MCF 10A (cell line): ENCODE measurements at regions of chr4 and their contacts with region 1.

Region 1: GRCh38 chr4:65580551-65580950 is 89.7 kb downstream of the EPHA5 start:
- DNase-seq: peak; percentile 23
- H3K4me3 Mint-ChIP-seq: no peak overlapping the region
- H3K27ac Mint-ChIP-seq: no peak overlapping the region
- H3K4me1 Mint-ChIP-seq: no peaks in the 10 kb centered on the region
- H3K27me3 Mint-ChIP-seq: no peaks in the 10 kb centered on the region
- CTCF ChIP-seq: peak; percentile 27

Region 2: GRCh38 chr4:65561164-65561563 is 19.4 kb before region 1 on chr4:
- CTCF ChIA-PET with region 1: no interaction called
- POLR2A ChIA-PET with region 1: no interaction called
- intact Hi-C with region 1: no loop called
- DNase-seq: no peak
- H3K4me3 Mint-ChIP-seq: no peak overlapping the region
- H3K27ac Mint-ChIP-seq: no peak overlapping the region
- H3K4me1 Mint-ChIP-seq: no peaks in the 10 kb centered on the region
- H3K27me3 Mint-ChIP-seq: no peaks in the 10 kb centered on the region
- CTCF ChIP-seq: no peak

Region 3: GRCh38 chr4:65865489-65865888 is 284.9 kb after region 1 on chr4:
- CTCF ChIA-PET with region 1: no interaction called
- POLR2A ChIA-PET with region 1: no interaction called
- intact Hi-C with region 1: loop called (anchors 10 kb)
- DNase-seq: peak; percentile 35
- H3K4me3 Mint-ChIP-seq: no peak overlapping the region
- H3K27ac Mint-ChIP-seq: no peak overlapping the region
- H3K4me1 Mint-ChIP-seq: no peaks in the 10 kb centered on the region
- H3K27me3 Mint-ChIP-seq: no peaks in the 10 kb centered on the region
- CTCF ChIP-seq: peak; percentile 22